ENCODE measurements at regions of chr19 and their contacts with region 1.

Region 1: GRCh38 chr19:13952154-13953035 is at the start of gene DCAF15:
- DNase-seq: peak; percentile 100
- total RNA-seq, gene DCAF15: 17.0 TPM

Region 2: GRCh38 chr19:13597640-13598039 is 354.8 kb before region 1 on chr19:
- intact Hi-C with region 1: no loop called
- DNase-seq: no peak

Region 3: DNA sequence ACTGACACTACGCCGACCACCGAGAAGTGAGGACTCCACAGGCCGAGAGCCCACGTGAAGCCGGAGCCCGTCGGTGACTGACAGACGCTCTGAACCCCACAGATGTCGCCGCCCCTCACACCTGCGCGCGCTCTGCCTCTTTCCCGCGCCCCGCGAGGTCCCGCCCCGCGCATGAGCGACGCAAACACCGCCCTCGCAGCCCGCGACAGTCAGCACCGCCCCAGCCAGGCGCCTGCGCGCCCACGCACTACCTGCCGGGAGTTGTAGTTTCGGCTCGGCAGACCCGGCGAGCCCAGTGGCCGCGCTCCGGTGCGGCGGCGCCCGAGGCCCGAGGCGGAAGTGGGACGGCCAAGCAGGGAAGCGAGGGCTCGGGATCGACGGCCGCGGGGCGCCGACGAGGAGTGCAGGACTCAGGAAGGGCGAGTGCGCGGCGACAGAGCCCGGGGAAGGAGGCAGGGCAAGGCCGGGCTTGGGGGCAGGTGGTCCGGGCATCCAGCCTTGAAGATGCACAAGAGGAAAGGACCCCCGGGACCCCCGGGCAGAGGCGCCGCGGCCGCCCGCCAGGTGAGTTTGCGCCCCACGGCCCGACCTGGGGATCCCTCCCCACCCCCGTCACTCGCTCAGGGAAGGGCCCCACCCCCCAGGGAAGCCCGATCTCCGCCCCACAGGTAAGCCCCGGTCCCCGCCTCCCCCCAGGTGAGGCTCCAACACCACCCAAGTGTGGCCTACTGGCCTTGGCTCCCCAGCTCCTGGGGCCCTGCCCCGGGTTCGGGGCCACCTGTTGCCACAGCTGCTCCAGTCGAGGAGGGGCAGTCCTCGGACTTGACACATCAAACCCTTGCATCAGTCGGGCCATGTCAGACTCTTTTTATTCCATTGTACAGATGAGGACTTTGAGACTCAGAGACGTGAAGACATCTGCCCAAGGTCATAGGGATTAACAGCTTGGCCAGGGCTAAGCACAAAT is 46.2 kb before region 1 on chr19 and contains the starts of genes BRME1 and CC2D1A:
- intact Hi-C with region 1: loop called (anchors 5 kb)
- DNase-seq: peak; percentile 99
- total RNA-seq, gene BRME1: 0.35 TPM
- total RNA-seq, gene CC2D1A: 19.5 TPM

Region 4: DNA sequence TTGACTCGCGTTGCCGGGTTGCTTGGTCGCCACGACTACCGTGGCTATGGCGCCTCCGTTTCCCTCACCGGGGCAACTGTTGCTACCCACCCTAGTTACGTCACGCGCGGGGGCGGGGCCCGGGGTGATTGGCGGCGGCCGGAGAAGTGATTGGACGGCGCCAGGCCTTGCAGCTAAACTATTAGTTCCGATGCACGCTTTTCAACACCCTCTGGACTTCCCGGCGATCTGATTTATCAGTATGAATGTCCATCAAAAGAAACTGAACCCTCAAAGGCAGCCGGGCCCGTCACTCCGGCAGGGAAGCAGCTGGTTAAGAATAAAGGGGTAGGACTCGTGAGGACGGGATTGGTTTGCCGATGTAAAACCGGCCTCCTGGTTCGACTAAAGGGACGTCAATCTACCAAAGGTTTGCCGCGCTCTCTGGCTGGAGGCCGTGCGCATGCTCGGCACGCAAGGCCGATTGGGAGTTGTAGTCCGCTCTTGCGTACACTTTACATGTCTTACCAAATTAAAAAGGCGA is 53.9 kb after region 1 on chr19 and contains the start of gene RFX1:
- intact Hi-C with region 1: loop called (anchors 2 kb)
- DNase-seq: peak; percentile 100
- total RNA-seq, gene RFX1: 13.4 TPM